AG04449 (cell line): ENCODE measurements at regions of chr1 and their contacts with region 1.

Region 1: DNA sequence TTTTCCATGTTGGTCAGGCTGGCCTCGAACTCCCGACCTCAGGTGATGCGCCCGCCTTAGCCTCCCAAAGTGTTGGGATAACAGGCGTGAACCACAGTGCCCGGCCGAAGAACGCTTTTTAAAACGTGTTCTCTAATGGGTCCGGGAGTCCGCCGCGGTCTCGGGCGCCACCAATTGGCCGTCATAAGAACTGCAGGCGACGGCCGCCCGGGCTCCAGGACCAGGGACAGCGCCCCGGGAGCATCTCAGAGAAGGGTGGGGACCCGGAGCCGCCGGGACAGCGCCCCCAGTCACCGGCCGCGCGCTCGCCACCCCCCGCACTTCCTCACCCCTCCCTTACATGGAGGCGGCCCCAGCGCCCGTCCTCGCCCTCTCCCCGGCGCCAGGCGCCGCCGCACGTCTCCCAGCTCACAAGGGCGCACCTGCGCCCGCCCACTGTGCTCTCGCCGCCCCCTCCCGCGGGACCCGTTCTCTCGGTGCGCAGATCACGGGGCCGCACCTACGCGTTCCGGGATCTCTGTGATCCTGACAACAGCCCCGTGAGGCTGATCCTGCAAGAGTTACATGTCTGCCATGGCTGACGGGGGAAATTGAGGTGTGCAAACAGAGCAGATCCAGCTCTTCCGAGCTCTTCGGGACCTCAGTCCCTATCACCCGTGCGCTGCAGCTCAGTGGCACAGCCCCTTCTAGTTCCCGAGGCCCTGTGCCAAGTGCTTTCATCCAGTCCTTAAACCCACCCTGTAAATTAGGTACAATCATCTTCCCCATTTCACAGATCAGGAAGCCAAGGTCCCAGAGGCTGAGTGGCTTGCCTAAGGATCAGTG is 9.8 kb downstream of the RAP1GAP start:
- DNase-seq: no peak
- H3K4me3 ChIP-seq: no peak overlapping the region
- CTCF ChIP-seq: peak; percentile 96

Region 2: DNA sequence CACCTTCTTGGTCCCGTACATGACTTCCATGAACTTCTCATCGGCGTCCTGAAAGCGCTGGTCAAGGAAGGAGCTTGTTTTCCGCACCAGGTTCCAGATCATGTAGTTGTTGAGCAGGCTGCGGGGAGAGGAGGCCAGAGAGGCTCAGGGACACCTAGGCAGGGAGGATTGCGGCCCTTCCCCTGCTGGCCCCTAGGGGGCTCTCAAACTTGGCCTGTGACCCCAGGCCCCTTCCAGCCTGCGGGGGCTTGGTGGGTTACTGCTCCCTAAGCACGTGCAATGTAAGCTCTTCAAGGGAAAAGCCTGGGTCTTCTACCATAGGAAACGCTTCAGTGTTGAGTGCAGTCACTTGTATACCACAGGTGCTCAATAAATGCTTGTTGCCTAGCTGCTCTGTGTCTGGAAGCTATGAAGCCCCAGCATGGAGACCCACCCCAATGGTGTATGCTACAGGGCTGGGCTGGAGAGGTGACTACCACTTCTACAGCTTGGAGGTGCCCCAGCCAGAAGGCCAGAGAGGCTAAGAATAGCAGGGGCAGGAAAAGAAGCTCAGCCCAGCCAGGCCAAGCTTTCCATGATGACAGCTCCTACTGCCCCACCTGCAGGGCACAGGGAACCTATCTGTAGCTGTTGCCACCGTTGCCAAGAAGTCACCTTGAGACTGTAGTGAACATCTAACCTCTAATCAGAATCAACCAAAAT is 414.2 kb before region 1 on chr1:
- CTCF ChIA-PET with region 1: no interaction called
- POLR2A ChIA-PET with region 1: no interaction called
- DNase-seq: no peak
- H3K4me3 ChIP-seq: no peak overlapping the region
- CTCF ChIP-seq: peak; percentile 28

Region 3: GRCh38 chr1:21647431-21648351 is 11.6 kb before region 1 on chr1:
- CTCF ChIA-PET with region 1: interaction called, 10 read pairs
- POLR2A ChIA-PET with region 1: no interaction called
- DNase-seq: no peak
- H3K4me3 ChIP-seq: no peak overlapping the region
- CTCF ChIP-seq: no peak

Region 4: GRCh38 chr1:21669258-21670058 is 10.1 kb after region 1 on chr1 and contains the start of gene RAP1GAP:
- CTCF ChIA-PET with region 1: interaction called, 12 read pairs
- POLR2A ChIA-PET with region 1: no interaction called
- DNase-seq: no peak
- H3K4me3 ChIP-seq: peak within 1 kb of the TSS; percentile 12; the same call in 1 of the 2 replicates
- CTCF ChIP-seq: no peak

Region 5: GRCh38 chr1:21749109-21749508 is 89.8 kb after region 1 on chr1:
- CTCF ChIA-PET with region 1: no interaction called
- POLR2A ChIA-PET with region 1: no interaction called
- DNase-seq: no peak
- H3K4me3 ChIP-seq: no peak overlapping the region
- CTCF ChIP-seq: no peak